Activated CD8-positive, alpha-beta memory T cell treated with anti-CD3 and anti-CD28 coated beads, Interleukin-2, amount 10 ng/mL, durations not matched to agents 7 days and 5 days (primary cell): ENCODE measurements at regions of chr6 and their contacts with region 1.

Region 1: GRCh38 chr6:70955441-70956190 is 1.2 kb downstream of the B3GAT2 start:
- DNase-seq: peak; percentile 88
- ATAC-seq: peak; percentile 97
- H3K4me3 Mint-ChIP-seq: peak overlapping the region; percentile 55
- H3K27ac Mint-ChIP-seq: no peak overlapping the region
- H3K4me1 Mint-ChIP-seq: peaks cover 18% of the 10 kb centered on the region
- H3K27me3 Mint-ChIP-seq: peaks cover 88% of the 10 kb centered on the region

Region 2: GRCh38 chr6:70310063-70310694 is 645.4 kb before region 1 on chr6:
- CTCF ChIA-PET with region 1: interaction called, 14 read pairs
- DNase-seq: no peak
- ATAC-seq: no peak
- H3K4me3 Mint-ChIP-seq: no peak overlapping the region
- H3K27ac Mint-ChIP-seq: no peak overlapping the region
- H3K4me1 Mint-ChIP-seq: no peaks in the 10 kb centered on the region
- H3K27me3 Mint-ChIP-seq: peaks cover 32% of the 10 kb centered on the region

Region 3: DNA sequence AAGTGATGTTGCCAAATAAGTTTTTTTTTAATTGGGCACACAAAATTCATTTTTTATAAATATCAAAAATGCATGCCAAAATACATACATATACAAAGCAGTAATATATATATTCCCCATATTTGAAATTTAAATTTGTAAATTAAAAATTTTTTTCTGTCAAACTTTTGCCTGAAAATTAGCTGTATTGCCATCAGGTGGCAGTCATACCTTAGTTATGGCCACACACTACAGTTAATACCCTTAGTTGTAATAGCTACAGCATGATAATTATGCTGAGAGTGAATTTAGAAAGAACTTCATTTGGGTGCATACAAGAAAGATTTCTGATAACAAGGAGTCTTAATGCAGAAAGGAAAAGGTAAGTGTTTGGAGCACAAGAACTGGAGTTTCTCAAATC is 435.0 kb before region 1 on chr6:
- CTCF ChIA-PET with region 1: interaction called, 14 read pairs
- DNase-seq: no peak
- ATAC-seq: no peak
- H3K4me3 Mint-ChIP-seq: no peak overlapping the region
- H3K27ac Mint-ChIP-seq: no peak overlapping the region
- H3K4me1 Mint-ChIP-seq: no peaks in the 10 kb centered on the region
- H3K27me3 Mint-ChIP-seq: no peaks in the 10 kb centered on the region

Region 4: DNA sequence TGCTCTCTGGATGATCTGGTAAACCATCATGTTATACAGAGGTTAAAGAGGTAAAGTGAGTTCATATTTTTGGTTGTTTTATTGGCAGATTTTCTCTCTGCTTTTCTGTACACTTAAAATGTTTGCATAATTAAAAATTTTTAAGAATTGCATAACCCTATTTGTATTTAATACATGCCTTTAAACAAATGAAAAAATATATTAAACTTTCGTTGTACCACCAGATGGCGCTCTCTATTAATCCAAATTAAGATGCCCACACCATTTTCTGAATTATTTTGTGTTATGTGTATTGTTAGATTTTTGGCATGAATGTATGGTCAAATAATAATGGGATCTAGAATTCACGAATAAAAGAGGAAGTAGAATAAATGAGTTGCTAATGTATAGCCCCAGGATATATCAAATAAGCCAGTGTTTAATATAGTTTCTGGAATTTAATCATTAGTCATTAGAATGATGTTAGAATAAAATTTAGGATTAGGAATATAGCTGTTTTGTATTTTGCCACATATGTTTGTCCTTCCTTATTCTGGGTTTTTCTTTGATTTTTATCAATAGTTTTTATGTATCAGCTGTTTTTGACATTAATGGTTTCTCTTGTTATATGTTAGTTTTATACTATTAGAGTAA is 249.0 kb before region 1 on chr6:
- CTCF ChIA-PET with region 1: interaction called, 27 read pairs
- DNase-seq: no peak
- ATAC-seq: no peak
- H3K4me3 Mint-ChIP-seq: no peak overlapping the region
- H3K27ac Mint-ChIP-seq: no peak overlapping the region
- H3K4me1 Mint-ChIP-seq: peaks cover 14% of the 10 kb centered on the region
- H3K27me3 Mint-ChIP-seq: no peaks in the 10 kb centered on the region

Region 5: GRCh38 chr6:70884074-70884983 is 71.3 kb before region 1 on chr6:
- CTCF ChIA-PET with region 1: interaction called, 11 read pairs
- DNase-seq: peak; percentile 59
- ATAC-seq: peak; percentile 83
- H3K4me3 Mint-ChIP-seq: no peak overlapping the region
- H3K27ac Mint-ChIP-seq: no peak overlapping the region
- H3K4me1 Mint-ChIP-seq: no peaks in the 10 kb centered on the region
- H3K27me3 Mint-ChIP-seq: peaks cover 9% of the 10 kb centered on the region

Region 6: DNA sequence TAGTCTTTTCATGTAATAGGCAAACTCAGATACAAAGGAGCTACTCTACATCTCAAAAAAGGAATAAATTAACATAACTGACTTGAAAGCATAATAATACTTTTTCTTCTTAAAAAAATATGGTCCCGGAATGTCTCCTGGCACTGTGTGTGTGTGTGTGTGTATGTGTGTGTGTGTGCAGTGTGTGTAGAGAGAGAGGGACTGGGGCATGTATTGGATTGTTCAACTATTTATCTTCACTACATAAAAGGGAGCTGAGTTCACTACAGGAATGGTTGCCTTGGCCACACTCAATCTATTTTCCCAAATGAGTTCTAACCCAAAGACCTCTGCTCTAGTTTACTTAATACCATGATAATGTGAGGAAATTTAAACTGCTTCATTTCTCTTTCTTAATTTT is 49.9 kb before region 1 on chr6:
- CTCF ChIA-PET with region 1: interaction called, 10 read pairs
- DNase-seq: no peak
- ATAC-seq: no peak
- H3K4me3 Mint-ChIP-seq: no peak overlapping the region
- H3K27ac Mint-ChIP-seq: no peak overlapping the region
- H3K4me1 Mint-ChIP-seq: no peaks in the 10 kb centered on the region
- H3K27me3 Mint-ChIP-seq: peaks cover 13% of the 10 kb centered on the region